ENCODE measurements at regions of chr2 and their contacts with region 1.

Region 1: GRCh38 chr2:233449081-233449901 is 95.0 kb downstream of the DGKD start:
- DNase-seq: no peak
- ATAC-seq: peak in 4 of 8 donors; percentile 18 to 33 (median 28)
- H3K4me3 ChIP-seq: no peak overlapping the region
- H3K27ac ChIP-seq: no peak overlapping the region
- H3K4me1 ChIP-seq: peaks cover 0 to 13% (median 0%) of the 10 kb centered on the region in 9 donors
- H3K27me3 ChIP-seq: no peaks in the 10 kb centered on the region
- CTCF ChIP-seq: peak; percentile 24 to 66 (median 55)

Region 2: GRCh38 chr2:233353769-233354499 is 95.4 kb before region 1 on chr2 and contains the start of gene DGKD:
- intact Hi-C with region 1: loop called in 9 of 10 experiments (anchors 2 to 10 kb)
- DNase-seq: peak; percentile 40 to 75
- ATAC-seq: peak; percentile 71 to 91 (median 80)
- H3K4me3 ChIP-seq: peak within 1 kb of the TSS; percentile 54 to 83 (median 72)
- H3K27ac ChIP-seq: peak within 1 kb of the TSS in 6 of 10 donors; percentile 41 to 83 (median 56)
- H3K4me1 ChIP-seq: peaks cover 0 to 79% (median 20%) of the 10 kb centered on the region in 9 donors
- H3K27me3 ChIP-seq: no peaks in the 10 kb centered on the region
- CTCF ChIP-seq: peak in 6 of 9 donors; percentile 18 to 50 (median 30)
- total RNA-seq, gene DGKD: 26.8 to 79.5 (median 44.7) TPM

Region 3: GRCh38 chr2:233369897-233370685 is 79.2 kb before region 1 on chr2:
- intact Hi-C with region 1: no loop called
- DNase-seq: no peak
- ATAC-seq: no peak
- H3K4me3 ChIP-seq: no peak overlapping the region
- H3K27ac ChIP-seq: no peak overlapping the region
- H3K4me1 ChIP-seq: peaks cover 0 to 22% (median 8%) of the 10 kb centered on the region in 9 donors
- H3K27me3 ChIP-seq: no peaks in the 10 kb centered on the region
- CTCF ChIP-seq: no peak

Region 4: DNA sequence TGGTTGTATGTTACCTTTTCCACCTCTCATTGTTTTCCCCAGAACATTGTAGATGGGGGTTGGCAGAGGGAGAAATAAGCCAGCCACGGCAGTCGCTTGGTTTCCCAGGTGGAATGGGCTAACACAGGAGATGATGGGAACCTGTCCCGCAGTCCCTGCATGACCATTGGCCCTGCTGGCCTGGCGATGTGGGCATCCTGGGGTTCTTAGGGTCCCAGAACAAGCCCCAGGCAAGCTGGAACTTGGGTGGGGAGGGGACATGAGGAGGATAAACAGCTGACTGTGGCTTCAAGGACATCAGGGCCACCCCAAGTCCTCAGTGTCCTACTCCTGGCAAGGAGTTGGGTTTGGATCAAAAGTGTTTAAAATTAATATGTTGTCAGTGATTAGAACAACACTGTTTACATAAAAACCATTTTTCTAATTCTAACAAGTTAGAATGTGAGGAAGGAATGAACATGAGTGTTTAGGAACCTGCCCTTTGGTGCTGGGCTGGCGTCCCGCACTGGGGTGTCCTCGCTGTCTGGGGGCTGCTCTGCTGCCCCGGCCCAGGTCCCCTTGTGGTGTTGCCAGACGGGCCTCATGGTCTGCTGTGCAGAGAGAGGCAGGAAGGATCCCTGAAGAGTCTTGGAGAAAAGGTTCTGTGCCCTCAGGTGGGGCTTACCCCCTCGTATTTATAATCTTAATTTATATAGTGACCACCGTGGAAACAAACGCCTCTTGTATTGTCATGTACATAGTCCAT is 22.2 kb after region 1 on chr2:
- intact Hi-C with region 1: loop called in 1 of 10 experiments (anchors 1 kb)
- DNase-seq: no peak
- ATAC-seq: no peak
- H3K4me3 ChIP-seq: no peak overlapping the region
- H3K27ac ChIP-seq: peak overlapping the region in 5 of 10 donors; percentile 45 to 85 (median 83)
- H3K4me1 ChIP-seq: peaks cover 11 to 36% (median 18%) of the 10 kb centered on the region in 9 donors
- H3K27me3 ChIP-seq: no peaks in the 10 kb centered on the region
- CTCF ChIP-seq: no peak

Region 5: DNA sequence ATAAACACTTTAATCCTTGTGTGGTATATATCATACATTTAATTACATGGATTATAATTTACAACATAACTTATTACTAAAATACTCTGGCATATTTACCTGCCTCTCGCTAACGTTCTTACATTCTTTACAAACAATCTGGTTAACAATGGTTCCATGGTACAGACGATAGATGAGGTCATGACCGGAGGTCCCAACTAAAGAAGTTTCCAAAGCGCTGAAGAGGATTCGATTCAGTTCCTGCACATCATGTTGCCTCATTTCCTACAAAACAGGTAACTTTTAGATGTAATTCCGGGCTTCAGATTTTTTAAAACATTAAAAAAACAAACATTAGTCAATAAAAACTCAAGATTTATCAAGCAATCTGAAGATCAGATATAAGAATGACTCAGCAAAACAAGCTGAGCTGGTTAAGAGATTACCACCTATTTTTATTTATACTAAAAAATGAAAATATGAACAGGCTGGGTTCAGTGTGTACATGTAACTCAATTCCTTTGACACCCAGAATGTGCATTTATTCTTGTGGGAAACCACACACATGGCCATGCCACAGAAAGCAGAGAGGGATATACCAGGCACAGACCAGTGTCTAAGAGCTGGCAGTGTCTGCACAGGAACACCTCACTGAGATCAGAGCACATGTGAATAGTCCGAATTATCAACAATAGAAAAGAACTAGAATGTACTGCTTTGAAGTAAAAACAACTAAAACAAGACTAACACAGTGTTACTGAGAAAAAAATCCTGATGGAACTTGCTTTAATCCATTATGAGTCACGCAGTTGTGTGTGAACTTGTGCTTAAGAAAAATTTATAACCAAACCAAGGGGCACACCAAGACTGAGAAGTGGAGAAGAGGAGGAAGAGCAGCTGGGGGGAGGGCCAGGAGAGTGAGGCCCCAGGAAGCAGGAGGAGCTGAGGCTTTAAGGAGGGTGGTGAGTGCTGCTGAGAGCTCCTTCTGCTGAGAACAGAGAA is 107.8 kb after region 1 on chr2:
- intact Hi-C with region 1: no loop called
- DNase-seq: no peak
- ATAC-seq: no peak
- H3K4me3 ChIP-seq: no peak overlapping the region
- H3K27ac ChIP-seq: no peak overlapping the region
- H3K4me1 ChIP-seq: peaks cover 0 to 4% (median 0%) of the 10 kb centered on the region in 9 donors
- H3K27me3 ChIP-seq: no peaks in the 10 kb centered on the region
- CTCF ChIP-seq: no peak